ENCODE measurements at regions of chr2 and their contacts with region 1.

Region 1: DNA sequence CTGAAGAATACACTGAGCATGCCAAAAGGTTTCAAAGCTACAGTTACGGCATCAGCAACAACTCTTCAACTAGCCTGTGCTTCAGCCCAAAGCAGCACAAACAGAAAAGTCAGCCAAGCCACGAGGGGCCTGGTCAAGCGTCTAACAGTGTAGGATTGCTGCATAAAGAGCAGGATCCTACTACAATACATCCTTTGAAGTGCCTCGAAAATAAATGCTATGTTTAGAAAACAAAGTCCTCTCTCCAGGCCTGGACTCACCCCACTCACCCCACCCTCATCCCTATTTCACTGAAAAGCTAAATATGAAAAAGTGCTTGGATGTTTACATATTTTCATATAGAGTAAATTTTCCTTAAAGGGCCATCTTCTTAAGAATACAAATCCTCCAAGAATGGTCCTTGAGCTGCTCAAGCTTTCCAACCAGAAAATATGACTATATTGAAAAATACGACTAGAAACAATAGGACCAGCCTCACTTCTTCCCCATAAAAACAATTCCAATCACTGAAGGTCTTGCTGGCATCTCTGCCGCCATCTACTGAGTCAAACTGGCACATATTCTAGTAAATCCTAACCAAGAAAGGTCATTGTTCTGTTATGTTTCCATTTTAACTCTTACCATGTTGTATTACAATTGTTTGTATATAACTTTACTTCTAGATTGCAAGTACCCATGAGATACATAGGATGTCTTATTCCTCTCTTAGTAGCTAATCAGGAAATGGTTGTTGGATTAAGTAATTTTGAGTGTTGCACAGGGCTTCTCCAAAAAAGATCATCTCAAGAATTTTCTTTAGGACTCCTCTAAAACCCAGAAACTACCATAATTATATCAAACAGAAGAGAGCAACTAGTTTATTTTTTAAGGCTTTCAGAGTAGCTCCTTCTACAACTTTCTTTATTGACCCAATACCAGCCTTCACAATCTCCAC is 63.6 kb downstream of the CLHC1 start:
- DNase-seq: peak; percentile 66

Region 2: DNA sequence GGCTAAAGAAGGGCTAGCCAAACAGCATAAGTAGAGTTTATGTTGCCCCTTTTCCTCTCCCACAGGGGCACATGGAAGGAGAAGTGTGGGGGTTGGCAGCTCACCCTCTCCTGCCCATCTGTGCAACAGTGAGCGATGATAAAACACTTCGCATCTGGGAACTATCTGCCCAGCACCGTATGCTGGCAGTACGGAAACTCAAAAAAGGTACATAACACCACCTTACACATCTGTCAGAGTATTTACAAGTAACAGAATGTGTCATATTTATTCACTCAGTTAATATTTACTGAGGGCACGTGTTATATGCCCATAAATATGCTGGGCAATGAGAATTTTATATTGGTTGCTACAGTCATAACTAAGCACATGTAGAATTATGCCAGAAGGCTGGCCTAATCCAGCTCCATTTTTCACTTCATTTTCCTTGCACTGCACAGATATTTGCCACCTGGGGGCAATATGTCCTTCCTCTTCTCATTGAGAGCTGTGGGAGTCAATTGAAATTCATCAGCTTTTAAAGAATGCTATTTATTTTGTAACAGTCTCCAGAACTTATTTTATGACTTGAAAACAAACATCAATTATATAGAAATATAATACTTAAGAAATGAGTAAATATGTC is 268.8 kb before region 1 on chr2:
- in situ Hi-C with region 1: loop called (anchors 25 kb)
- DNase-seq: peak; percentile 42

Measured in KBM-7 (cell line).